ENCODE measurements at regions of chr1 and their contacts with region 1.

Region 1: GRCh38 chr1:6784560-6785317 is 515 bp upstream of the CAMTA1 start:
- DNase-seq: peak; percentile 100
- ATAC-seq: peak; percentile 89
- H3K4me3 Mint-ChIP-seq: peak overlapping the region; percentile 83
- H3K27ac Mint-ChIP-seq: peak overlapping the region; percentile 92
- H3K4me1 Mint-ChIP-seq: peaks cover 42% of the 10 kb centered on the region
- H3K27me3 Mint-ChIP-seq: no peaks in the 10 kb centered on the region

Region 2: DNA sequence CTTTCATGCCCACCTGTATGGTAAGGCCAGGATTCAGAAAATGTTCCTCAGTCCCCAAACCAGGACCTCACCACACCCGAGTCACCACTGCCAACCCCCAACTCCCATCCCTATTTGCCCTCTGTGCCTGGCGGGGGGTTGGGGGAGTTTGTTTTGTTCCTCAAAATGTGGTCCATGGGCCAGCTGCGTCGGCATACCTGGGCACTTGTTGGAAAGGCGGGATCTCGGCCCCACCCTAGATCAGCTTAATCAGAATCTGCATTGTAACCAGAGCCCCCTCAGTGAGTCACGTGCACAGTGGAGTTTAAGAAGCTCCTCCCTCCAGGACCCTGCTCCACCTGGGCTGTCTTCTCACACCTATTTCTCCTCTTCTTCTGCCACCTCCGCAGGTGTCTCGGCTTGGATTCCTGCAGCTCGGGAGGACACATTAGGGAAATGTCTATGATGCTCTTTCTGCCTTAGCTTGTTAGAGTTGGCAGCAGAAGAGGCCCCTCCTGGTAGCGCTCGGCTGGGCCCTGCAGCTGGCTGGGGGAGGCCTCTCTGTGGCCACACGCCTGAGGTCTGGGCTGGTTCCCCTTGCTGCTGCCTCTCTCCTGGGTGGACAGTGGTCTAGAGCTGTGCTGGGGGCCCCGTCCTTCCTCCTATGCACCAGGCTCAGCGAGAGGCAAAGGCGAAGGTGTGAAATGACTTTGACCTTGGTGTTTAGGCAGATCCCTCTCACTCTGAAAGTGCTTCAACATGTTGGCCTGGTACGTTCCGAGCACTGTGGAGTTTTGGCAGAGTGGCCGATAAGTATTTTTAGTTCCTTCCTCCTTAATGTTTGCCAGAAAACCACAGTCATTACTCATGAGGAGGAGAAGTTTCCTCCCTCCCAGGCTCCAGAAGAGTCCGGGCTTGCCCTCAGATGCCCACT is 41.3 kb before region 1 on chr1:
- CTCF ChIA-PET with region 1: interaction called, 3 read pairs
- POLR2A ChIA-PET with region 1: interaction called, 13 read pairs
- DNase-seq: peak; percentile 46
- ATAC-seq: peak; percentile 47
- H3K4me3 Mint-ChIP-seq: no peak overlapping the region
- H3K27ac Mint-ChIP-seq: no peak overlapping the region
- H3K4me1 Mint-ChIP-seq: peaks cover 11% of the 10 kb centered on the region
- H3K27me3 Mint-ChIP-seq: peaks cover 2% of the 10 kb centered on the region

Region 3: GRCh38 chr1:6805004-6805416 is 20.3 kb after region 1 on chr1:
- CTCF ChIA-PET with region 1: interaction called, 3 read pairs
- POLR2A ChIA-PET with region 1: interaction called, 10 read pairs
- DNase-seq: no peak
- ATAC-seq: no peak
- H3K4me3 Mint-ChIP-seq: no peak overlapping the region
- H3K27ac Mint-ChIP-seq: no peak overlapping the region
- H3K4me1 Mint-ChIP-seq: peaks cover 21% of the 10 kb centered on the region
- H3K27me3 Mint-ChIP-seq: no peaks in the 10 kb centered on the region

Region 4: GRCh38 chr1:7196036-7196911 is 411.5 kb after region 1 on chr1:
- CTCF ChIA-PET with region 1: no interaction called
- POLR2A ChIA-PET with region 1: no interaction called
- DNase-seq: no peak
- ATAC-seq: no peak
- H3K4me3 Mint-ChIP-seq: no peak overlapping the region
- H3K27ac Mint-ChIP-seq: no peak overlapping the region
- H3K4me1 Mint-ChIP-seq: no peaks in the 10 kb centered on the region
- H3K27me3 Mint-ChIP-seq: peaks cover 2% of the 10 kb centered on the region

Measured in activated CD8-positive, alpha-beta T cell treated with anti-CD3 and anti-CD28 coated beads, Interleukin-2, amount 10 ng/mL, durations not matched to agents 7 days and 5 days (primary cell).